ENCODE measurements at regions of chr5 and their contacts with region 1.

Region 1: GRCh38 chr5:160342403-160342941 is 28.0 kb downstream of the C1QTNF2 start:
- H3K4me3 ChIP-seq: no peak overlapping the region
- H3K27ac ChIP-seq: no peak overlapping the region
- H3K4me1 ChIP-seq: no peaks in the 10 kb centered on the region
- CTCF ChIP-seq: no peak

Region 2: GRCh38 chr5:160082614-160083500 is 259.6 kb before region 1 on chr5:
- CTCF ChIA-PET with region 1: interaction called, 15 read pairs
- POLR2A ChIA-PET with region 1: no interaction called
- H3K4me3 ChIP-seq: no peak overlapping the region
- H3K27ac ChIP-seq: no peak overlapping the region
- H3K4me1 ChIP-seq: peaks cover 4% of the 10 kb centered on the region
- CTCF ChIP-seq: no peak

Region 3: DNA sequence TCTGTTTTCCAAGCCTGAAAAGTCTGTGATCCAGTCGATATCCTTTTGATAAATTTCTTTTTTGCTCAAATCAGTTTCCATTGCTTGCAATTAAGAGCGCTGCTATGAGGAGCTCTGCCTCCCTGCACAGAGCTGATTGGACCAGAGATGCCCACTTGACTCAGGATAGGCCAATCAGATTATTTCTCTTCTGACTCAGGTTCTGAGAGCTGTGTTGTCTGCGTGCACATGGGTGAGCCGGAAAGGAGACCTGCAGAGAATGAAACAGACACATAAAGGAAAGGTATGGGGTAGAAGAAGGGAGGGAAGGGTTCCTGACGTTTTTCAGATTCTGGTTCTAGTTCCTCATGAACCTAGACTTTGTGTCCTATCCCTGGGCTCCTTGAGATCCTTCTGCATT is 128.9 kb before region 1 on chr5:
- CTCF ChIA-PET with region 1: no interaction called
- POLR2A ChIA-PET with region 1: no interaction called
- H3K4me3 ChIP-seq: no peak overlapping the region
- H3K27ac ChIP-seq: no peak overlapping the region
- H3K4me1 ChIP-seq: no peaks in the 10 kb centered on the region
- CTCF ChIP-seq: no peak

Region 4: DNA sequence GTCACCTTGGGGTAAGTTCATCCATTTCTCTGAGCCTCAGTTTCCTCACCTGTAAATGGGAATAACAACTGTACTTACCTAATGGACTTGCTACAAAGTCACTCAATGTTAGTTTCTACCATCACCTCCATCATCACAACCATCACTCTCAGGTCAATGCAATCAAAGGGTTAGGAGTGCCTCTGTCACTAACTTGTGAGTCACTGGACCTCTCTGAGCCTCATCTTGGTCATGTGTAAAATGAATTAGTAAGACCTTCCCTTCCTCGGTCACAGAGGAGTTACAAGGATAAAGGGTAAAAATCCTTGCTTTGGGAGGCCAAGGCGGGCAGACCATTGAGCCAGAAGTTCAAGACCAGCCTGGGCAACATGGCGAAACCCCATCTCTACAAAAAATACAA is 100.3 kb before region 1 on chr5:
- CTCF ChIA-PET with region 1: interaction called, 12 read pairs
- POLR2A ChIA-PET with region 1: interaction called, 3 read pairs
- H3K4me3 ChIP-seq: no peak overlapping the region
- H3K27ac ChIP-seq: no peak overlapping the region
- H3K4me1 ChIP-seq: no peaks in the 10 kb centered on the region
- CTCF ChIP-seq: no peak

Region 5: DNA sequence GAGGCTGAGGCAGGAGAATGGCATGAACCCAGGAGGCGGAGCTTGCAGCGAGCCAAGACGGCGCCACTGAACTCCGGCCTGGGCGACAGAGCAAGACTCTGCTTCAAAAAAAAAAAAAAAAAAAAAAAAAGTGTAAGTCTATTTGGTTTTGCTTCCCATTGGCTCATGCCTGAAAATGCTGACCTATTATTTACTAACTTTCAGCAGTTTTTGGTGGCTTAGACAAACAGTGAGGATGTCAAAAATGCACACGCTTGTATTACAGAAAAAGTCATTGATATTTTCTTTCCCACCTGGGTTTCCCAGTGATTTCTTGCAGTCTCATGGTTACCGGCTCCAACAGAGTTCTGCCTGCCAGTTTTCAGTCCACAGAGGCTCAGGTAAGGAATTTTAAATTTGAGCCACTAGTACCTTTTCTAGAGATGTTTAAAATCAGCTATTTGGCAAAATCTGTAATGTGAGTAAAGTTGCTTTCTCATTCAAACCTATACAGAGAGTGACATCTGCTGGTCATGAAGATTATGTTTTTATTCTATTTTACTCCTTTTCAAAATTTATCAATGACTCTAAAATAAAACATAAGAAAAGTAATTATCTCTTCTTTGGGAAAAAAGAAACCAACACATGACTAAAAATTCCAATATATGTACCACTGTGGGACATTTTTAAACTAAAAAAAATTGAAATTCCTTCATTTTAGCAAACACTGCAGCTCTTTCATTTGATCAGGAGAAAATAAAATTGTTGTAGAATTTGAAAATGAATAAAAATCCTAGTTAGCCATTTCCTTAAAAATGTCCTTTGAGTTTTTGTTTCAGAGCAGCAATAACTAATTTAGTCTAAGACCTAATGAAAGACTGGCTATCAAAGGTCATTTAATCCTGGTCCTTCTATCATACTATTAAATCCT is 48.6 kb after region 1 on chr5:
- CTCF ChIA-PET with region 1: interaction called, 12 read pairs
- POLR2A ChIA-PET with region 1: interaction called, 3 read pairs
- H3K4me3 ChIP-seq: no peak overlapping the region
- H3K27ac ChIP-seq: no peak overlapping the region
- H3K4me1 ChIP-seq: no peaks in the 10 kb centered on the region
- CTCF ChIP-seq: no peak

Region 6: DNA sequence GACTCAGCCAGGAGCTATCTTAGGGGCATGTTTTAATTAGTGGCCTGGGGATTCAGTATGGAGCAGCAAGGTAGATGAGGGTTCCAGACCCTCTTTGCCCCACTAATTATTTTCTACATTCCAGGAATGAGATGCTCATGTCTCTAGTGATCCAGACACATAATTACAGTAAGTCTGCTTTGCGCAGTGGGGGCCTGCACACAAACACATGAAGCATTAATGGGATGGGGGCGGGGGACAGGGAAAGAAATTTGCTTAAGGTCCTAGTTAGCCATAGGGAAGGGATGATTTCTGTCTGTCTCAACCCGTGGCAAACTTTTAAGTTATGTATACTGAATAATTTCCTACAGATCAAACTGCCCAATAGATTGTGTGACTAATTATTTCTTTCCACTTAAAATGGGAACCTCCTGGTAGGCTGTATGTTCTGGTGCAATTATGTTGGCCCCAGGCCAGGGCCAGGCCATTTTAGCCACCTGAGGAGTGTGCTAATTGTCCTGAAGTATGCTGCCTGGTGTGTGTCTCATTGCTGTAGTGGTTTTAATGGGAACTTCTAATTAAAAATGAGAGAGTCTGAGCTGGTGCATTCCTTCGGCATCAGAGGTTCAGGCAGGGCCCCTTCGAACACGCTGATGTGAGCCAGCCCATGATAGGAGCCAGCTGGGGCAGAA is 213.6 kb after region 1 on chr5:
- CTCF ChIA-PET with region 1: no interaction called
- POLR2A ChIA-PET with region 1: no interaction called
- H3K4me3 ChIP-seq: no peak overlapping the region
- H3K27ac ChIP-seq: no peak overlapping the region
- H3K4me1 ChIP-seq: no peaks in the 10 kb centered on the region
- CTCF ChIP-seq: no peak